GM12878 (cell line): ENCODE measurements at regions of chr4 and their contacts with region 1.

Region 1: GRCh38 chr4:47791965-47792364 is 45.9 kb downstream of the CORIN start:
- DNase-seq: no peak
- ATAC-seq: peak; percentile 47; the same call in 2 of the 3 replicates
- H3K4me3 ChIP-seq: no peak overlapping the region
- H3K27ac ChIP-seq: no peak overlapping the region
- H3K4me1 ChIP-seq: no peaks in the 10 kb centered on the region
- H3K27me3 ChIP-seq: no peaks in the 10 kb centered on the region
- CTCF ChIP-seq: no peak
- EP300 ChIP-seq: no peak
- POLR2A ChIP-seq: no peak
- RAD21 ChIP-seq: no peak

Region 2: DNA sequence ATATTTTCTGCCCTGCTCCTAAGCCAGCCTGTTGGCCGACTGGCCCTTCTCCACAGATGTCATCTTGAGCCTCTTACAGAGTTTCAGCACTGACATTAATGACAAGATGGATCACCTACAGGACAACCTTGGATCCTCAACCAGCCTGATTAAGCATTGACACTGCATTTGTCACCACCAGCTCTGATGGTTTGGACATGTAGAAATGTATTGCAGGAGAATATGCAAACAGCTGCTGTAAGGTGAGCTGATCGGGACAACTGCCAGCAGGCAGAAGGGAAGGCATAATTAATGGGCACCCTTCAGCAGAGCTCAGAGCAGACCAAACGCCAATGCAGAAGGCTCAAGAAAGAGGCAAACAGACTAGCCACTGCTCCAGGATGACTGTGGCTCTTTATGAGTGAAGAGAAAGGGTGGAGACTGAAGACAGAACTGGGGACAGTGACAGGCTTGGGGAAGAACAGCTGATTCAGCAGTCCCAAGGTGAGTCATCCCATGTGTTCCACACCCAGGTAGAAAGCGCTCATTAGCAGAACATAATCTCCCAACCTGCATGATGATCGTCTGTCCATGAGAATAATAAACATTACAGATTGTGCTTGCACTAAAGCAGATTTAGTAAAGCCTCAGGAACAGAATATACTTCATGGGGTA is 39.2 kb after region 1 on chr4:
- CTCF ChIA-PET with region 1: interaction called, 3 read pairs
- POLR2A ChIA-PET with region 1: no interaction called
- RAD21 ChIA-PET with region 1: no interaction called
- SMC1A ChIA-PET with region 1: interaction called, 3 read pairs
- in situ Hi-C with region 1: no loop called
- intact Hi-C with region 1: loop called (anchors 5 kb)
- DNase-seq: no peak
- ATAC-seq: no peak
- H3K4me3 ChIP-seq: no peak overlapping the region
- H3K27ac ChIP-seq: no peak overlapping the region
- H3K4me1 ChIP-seq: peaks cover 7% of the 10 kb centered on the region; the same call in 1 of the 2 replicates
- H3K27me3 ChIP-seq: no peaks in the 10 kb centered on the region
- CTCF ChIP-seq: no peak
- EP300 ChIP-seq: no peak
- POLR2A ChIP-seq: no peak
- RAD21 ChIP-seq: no peak

Region 3: GRCh38 chr4:47954677-47955076 is 162.7 kb after region 1 on chr4:
- CTCF ChIA-PET with region 1: no interaction called
- POLR2A ChIA-PET with region 1: no interaction called
- RAD21 ChIA-PET with region 1: no interaction called
- SMC1A ChIA-PET with region 1: no interaction called
- in situ Hi-C with region 1: no loop called
- intact Hi-C with region 1: no loop called
- DNase-seq: no peak
- ATAC-seq: no peak
- H3K4me3 ChIP-seq: no peak overlapping the region
- H3K27ac ChIP-seq: no peak overlapping the region
- H3K4me1 ChIP-seq: no peaks in the 10 kb centered on the region
- H3K27me3 ChIP-seq: no peaks in the 10 kb centered on the region; a peak in 1 of 4 replicates
- CTCF ChIP-seq: no peak
- EP300 ChIP-seq: no peak
- POLR2A ChIP-seq: no peak
- RAD21 ChIP-seq: no peak